GM12878 (cell line): ENCODE measurements at regions of chr10 and their contacts with region 1.

Region 1: GRCh38 chr10:108014902-108015177 is 850.3 kb upstream of the SORCS1 start:
- DNase-seq: peak; percentile 65
- ATAC-seq: peak; percentile 95
- H3K4me3 ChIP-seq: no peak overlapping the region
- H3K27ac ChIP-seq: no peak overlapping the region
- H3K4me1 ChIP-seq: no peaks in the 10 kb centered on the region
- H3K27me3 ChIP-seq: no peaks in the 10 kb centered on the region
- CTCF ChIP-seq: no peak
- EP300 ChIP-seq: peak; percentile 94 to 98
- POLR2A ChIP-seq: no peak
- RAD21 ChIP-seq: no peak; the same call in 1 of the 2 replicates

Region 2: GRCh38 chr10:107914450-107915214 is 100.2 kb before region 1 on chr10:
- CTCF ChIA-PET with region 1: interaction called, 4 read pairs
- POLR2A ChIA-PET with region 1: no interaction called
- RAD21 ChIA-PET with region 1: interaction called, 6 read pairs
- SMC1A ChIA-PET with region 1: interaction called, 7 read pairs
- in situ Hi-C with region 1: no loop called
- intact Hi-C with region 1: loop called (anchors 5 kb)
- DNase-seq: no peak
- ATAC-seq: peak; percentile 73
- H3K4me3 ChIP-seq: no peak overlapping the region
- H3K27ac ChIP-seq: no peak overlapping the region
- H3K4me1 ChIP-seq: no peaks in the 10 kb centered on the region
- H3K27me3 ChIP-seq: no peaks in the 10 kb centered on the region
- CTCF ChIP-seq: no peak; a peak in 1 of 6 replicates
- EP300 ChIP-seq: no peak
- POLR2A ChIP-seq: no peak
- RAD21 ChIP-seq: no peak

Region 3: GRCh38 chr10:108000365-108000764 is 14.5 kb before region 1 on chr10:
- CTCF ChIA-PET with region 1: interaction called, 4 read pairs
- POLR2A ChIA-PET with region 1: interaction called, 15 read pairs
- RAD21 ChIA-PET with region 1: interaction called, 12 read pairs
- SMC1A ChIA-PET with region 1: interaction called, 15 read pairs
- in situ Hi-C with region 1: no loop called
- intact Hi-C with region 1: no loop called
- DNase-seq: no peak
- ATAC-seq: peak; percentile 51
- H3K4me3 ChIP-seq: no peak overlapping the region
- H3K27ac ChIP-seq: no peak overlapping the region
- H3K4me1 ChIP-seq: no peaks in the 10 kb centered on the region; the same call in 1 of the 2 replicates
- H3K27me3 ChIP-seq: no peaks in the 10 kb centered on the region
- CTCF ChIP-seq: no peak
- EP300 ChIP-seq: no peak
- POLR2A ChIP-seq: no peak
- RAD21 ChIP-seq: no peak

Region 4: DNA sequence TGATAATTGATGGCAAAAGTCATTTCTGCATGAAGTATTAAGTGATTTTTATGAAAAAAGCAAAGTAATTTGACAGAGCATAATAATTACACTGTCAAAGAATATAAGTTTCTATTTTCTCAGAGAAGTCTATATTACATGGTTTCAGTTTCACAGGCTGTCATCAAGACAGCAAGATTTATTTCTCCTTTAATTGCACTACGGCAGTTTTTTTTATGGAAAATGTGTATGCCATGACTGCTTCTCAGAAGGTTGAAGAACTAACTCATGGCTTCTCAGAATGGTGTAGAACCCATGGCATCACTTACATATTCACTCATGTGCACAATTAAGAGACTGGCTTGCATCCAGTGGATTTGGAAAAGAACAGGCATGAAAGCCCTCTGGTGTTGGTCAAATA is 20.0 kb after region 1 on chr10:
- CTCF ChIA-PET with region 1: interaction called, 5 read pairs
- POLR2A ChIA-PET with region 1: interaction called, 3 read pairs
- RAD21 ChIA-PET with region 1: interaction called, 6 read pairs
- SMC1A ChIA-PET with region 1: interaction called, 22 read pairs
- in situ Hi-C with region 1: no loop called
- intact Hi-C with region 1: no loop called
- DNase-seq: no peak
- ATAC-seq: peak; percentile 63
- H3K4me3 ChIP-seq: no peak overlapping the region
- H3K27ac ChIP-seq: no peak overlapping the region
- H3K4me1 ChIP-seq: no peaks in the 10 kb centered on the region
- H3K27me3 ChIP-seq: no peaks in the 10 kb centered on the region
- CTCF ChIP-seq: no peak
- EP300 ChIP-seq: no peak
- POLR2A ChIP-seq: no peak
- RAD21 ChIP-seq: no peak

Region 5: DNA sequence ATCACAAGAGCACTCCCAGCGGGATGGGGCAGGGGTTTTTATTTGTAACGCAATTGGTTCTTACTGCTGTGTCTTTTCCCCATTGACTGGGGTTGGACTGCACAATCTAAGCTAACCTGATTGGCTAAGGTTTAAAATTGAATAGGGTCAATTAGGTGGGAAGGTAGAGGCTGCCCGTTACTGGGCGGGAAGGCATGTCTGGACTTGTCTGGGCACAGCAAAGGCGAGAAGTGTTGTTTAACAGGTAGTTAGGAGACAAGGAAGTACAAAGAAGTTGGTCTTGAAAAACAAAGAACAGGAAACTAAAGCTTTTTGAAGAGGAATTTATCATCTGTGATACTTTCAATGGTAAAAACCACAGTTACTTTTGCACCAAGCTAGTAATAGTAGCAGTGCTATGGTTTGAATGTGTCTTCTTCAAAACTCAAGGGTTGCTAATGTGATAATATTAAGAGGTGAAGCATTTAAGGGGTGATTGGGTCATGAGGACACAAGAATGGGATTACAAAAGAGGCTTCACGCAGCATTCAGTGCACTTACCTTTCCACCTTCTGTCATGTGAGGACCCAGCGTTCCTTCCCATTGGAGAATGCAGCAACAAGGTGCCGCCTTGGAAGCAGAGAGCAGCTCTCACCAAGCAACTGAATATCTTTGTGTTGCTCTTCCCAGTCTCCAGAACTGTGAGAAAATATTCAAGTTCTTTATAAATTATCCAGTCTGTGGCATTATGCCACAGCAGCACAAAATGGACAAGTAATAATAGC is 25.2 kb after region 1 on chr10:
- CTCF ChIA-PET with region 1: interaction called, 3 read pairs
- POLR2A ChIA-PET with region 1: no interaction called
- RAD21 ChIA-PET with region 1: no interaction called
- SMC1A ChIA-PET with region 1: interaction called, 10 read pairs
- in situ Hi-C with region 1: no loop called
- intact Hi-C with region 1: no loop called
- DNase-seq: no peak
- ATAC-seq: peak; percentile 39
- H3K4me3 ChIP-seq: no peak overlapping the region
- H3K27ac ChIP-seq: no peak overlapping the region
- H3K4me1 ChIP-seq: peaks cover 3% of the 10 kb centered on the region; the same call in 1 of the 2 replicates
- H3K27me3 ChIP-seq: no peaks in the 10 kb centered on the region
- CTCF ChIP-seq: no peak
- EP300 ChIP-seq: no peak
- POLR2A ChIP-seq: no peak
- RAD21 ChIP-seq: no peak